Right ventricle myocardium superior (tissue), 1 donor: ENCODE measurements at regions of chr3 and their contacts with region 1.

Region 1: DNA sequence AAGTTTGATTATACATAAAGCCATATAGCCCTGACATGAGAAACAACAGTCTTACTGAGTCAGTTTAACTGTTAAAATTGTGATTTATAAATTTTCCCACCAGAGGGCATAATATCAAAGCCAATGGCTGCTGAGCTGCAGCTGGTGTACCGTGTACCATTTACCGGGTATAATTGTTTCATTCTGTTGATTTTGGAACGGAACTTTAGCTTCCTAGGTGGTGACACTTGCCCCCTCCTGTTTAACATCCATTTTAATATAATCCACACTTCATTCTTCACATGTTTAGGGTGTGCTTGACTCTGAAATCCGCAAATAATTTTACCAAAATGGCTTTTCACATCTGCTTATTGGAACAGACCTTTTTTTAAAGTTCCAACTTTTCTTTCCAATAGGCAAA is 72.8 kb downstream of the SLC9A9 start:
- DNase-seq: no peak
- ATAC-seq: peak; percentile 78

Region 2: DNA sequence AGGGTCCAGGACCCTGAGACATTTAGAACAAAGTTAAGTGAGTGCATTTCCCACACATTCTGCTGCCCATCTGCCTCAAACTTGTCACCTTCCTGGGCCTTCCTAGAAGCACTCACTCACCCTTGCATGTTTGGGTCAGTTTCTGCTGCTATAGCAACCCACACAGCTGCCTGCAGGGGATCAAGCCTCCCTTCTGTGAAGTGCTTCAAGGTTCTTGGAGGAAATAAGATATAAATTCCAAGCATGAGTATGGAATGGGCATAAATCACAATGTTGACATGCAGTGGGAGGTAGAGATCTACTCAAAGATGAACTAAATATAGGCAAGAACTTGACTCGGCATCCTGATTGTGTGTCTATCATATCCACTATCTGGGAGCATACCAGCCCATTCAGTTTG is 67.6 kb before region 1 on chr3:
- intact Hi-C with region 1: no loop called
- DNase-seq: no peak
- ATAC-seq: no peak

Region 3: DNA sequence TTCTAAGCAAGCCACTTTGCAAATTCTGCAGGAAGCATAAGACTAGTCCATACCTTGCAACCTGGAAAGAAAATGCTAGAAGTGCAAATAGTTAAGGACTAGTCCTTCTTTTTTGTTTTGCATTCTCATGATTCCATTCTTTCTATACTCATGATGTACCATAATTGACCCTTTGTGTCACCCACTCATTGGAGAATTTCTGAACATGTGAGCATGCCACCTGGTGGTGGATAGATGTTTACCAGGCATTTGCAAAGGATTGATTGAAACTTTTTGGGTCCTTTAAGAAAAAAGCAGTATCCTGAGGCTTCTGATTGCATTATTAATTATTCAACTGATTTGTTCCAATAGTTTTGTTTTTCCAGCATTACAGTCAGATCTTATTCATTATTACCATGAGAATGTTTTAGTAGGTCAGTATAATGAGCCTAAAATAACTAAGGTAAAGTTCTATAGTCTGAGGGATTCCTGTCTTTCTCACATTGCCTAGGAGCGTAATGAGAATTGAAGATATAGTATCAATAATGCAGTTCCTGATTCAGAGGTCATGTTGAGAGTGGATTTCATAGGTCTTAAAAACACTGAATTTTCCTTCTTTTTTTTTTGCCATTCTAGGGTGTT is 176.0 kb after region 1 on chr3:
- intact Hi-C with region 1: loop called (anchors 10 kb)
- DNase-seq: no peak
- ATAC-seq: no peak